AG04450 (cell line): ENCODE measurements at regions of chr1 and their contacts with region 1.

Region 1: DNA sequence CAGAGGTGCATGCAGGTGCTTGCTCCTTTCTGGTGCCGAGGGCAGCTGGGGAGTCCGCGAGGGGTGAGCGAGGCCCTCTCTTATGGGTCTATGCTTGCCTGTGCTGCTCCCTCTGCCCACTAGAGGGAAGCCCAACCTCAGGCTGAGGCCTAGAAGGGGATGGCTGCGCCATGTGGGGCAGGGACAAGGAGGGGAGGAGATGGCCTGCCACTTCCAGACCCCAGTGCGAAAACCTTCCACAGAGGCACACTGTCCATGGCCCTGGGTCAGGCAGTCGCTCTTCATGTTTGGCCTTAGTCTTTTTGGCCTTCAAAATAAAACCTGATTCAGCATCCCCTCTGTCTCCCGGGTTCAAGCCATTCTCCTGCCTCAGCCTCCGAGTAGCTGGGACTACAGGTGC is 14.0 kb downstream of the RHBG start:
- DNase-seq: no peak
- H3K4me3 ChIP-seq: no peak overlapping the region
- H3K27ac ChIP-seq: no peak overlapping the region
- H3K27me3 ChIP-seq: peaks cover 30% of the 10 kb centered on the region
- CTCF ChIP-seq: peak; percentile 91

Region 2: DNA sequence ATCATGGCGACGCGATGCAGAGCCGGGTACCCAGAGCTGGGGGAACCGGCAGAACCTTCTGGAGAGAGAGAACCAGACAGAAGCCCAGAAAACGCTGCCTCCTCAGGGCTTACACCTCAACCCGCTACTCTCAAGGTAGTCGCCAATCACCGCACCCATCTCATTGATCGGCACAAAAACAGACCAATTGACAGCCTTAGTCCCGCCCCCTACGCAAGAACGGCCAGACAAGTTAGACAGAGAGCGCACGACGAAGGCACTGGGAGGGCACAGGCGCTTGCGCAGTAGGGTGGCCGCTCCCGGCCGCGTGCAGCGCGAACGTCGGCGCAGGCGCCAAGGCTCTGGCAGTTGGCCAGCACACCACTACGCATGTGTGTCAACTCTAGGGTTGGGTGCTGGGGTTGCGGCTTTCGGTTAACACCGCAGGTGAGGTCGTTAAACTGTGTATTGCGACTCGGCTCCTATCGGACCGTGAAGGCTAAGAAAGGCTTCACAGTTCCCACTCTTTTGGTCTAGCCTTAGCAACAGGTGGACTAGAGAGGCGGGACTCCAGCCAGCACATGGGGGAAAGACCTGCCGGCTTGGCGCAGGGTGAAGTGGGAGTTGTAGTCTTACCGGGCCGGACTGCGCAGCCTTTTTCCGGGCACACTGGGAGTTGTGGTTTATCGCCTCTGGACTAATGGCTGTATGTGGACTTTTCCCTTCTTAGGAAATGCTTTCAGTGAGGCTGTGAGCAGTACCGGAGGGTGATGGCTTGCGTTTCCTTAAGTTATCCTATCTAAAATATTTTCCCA is 44.6 kb before region 1 on chr1 and contains the starts of genes CCT3 and TSACC:
- CTCF ChIA-PET with region 1: interaction called, 11 read pairs
- POLR2A ChIA-PET with region 1: no interaction called
- DNase-seq: peak; percentile 100
- H3K4me3 ChIP-seq: peak within 1 kb of the TSS; percentile 98
- H3K27ac ChIP-seq: peak within 1 kb of the TSS; percentile 39
- H3K27me3 ChIP-seq: no peaks in the 10 kb centered on the region
- CTCF ChIP-seq: no peak
- polyA plus RNA-seq, gene CCT3: 314 and 359 TPM in 2 replicates
- polyA plus RNA-seq, gene TSACC: 0.27 and 0.48 TPM in 2 replicates

Region 3: GRCh38 chr1:156394835-156395461 is 11.9 kb after region 1 on chr1:
- CTCF ChIA-PET with region 1: interaction called, 15 read pairs
- POLR2A ChIA-PET with region 1: no interaction called
- DNase-seq: no peak
- H3K4me3 ChIP-seq: no peak overlapping the region
- H3K27ac ChIP-seq: no peak overlapping the region
- H3K27me3 ChIP-seq: peaks cover 46% of the 10 kb centered on the region
- CTCF ChIP-seq: no peak

Region 4: DNA sequence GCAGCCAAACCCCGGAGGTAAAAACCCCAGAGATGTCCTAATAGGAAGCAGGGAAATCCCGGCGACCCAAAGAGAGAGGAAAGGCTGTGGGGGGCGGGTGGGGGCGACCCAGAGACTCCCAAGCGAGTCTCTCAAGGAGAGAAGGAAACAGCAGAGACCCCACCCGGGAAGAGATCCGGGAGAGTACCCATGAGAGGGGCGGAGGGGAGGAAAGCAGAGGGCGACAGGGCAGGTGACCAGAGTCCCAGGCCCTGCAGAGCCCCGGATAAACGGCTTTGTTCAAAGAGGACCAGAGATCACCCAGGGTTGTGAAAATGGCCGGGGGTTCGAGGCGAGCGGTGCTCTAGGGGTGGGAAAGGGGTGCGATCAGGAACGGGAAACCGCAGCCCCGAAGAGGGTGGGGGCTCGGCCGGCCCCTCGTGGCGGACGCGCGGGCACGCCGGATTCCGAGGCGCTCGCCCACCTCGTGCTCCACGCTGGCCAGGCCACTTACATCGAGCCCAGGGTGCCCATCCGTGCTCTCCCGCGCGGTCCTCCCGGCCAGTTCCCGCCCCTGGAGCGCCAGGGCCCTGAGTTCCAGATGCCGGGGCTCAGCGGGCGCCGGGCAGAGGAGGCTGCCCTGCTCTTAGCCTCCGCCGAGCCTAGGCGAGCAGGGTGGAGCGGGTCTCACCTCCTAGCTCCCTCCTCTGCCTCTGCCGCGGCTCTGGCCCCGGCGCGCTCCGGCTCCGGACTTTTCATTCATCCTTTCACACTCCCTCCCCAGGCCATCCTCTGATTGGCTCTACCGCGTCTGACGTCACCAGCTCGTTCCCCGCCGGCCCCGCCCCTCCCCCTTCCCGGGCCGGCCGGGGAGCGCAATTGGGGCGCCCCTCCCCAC is 38.3 kb after region 1 on chr1:
- CTCF ChIA-PET with region 1: interaction called, 20 read pairs
- POLR2A ChIA-PET with region 1: no interaction called
- DNase-seq: no peak
- H3K4me3 ChIP-seq: no peak overlapping the region; the same call in 1 of the 2 replicates
- H3K27ac ChIP-seq: no peak overlapping the region
- H3K27me3 ChIP-seq: peaks cover 82% of the 10 kb centered on the region
- CTCF ChIP-seq: no peak

Region 5: GRCh38 chr1:156445789-156446263 is 62.8 kb after region 1 on chr1:
- CTCF ChIA-PET with region 1: interaction called, 445 read pairs
- POLR2A ChIA-PET with region 1: interaction called, 15 read pairs
- DNase-seq: peak; percentile 39
- H3K4me3 ChIP-seq: no peak overlapping the region
- H3K27ac ChIP-seq: no peak overlapping the region
- H3K27me3 ChIP-seq: peaks cover 64% of the 10 kb centered on the region
- CTCF ChIP-seq: peak; percentile 99

Region 6: GRCh38 chr1:156601122-156601830 is 218.3 kb after region 1 on chr1 and contains the start of gene GPATCH4:
- CTCF ChIA-PET with region 1: interaction called, 19 read pairs
- POLR2A ChIA-PET with region 1: interaction called, 4 read pairs
- DNase-seq: peak; percentile 78
- H3K4me3 ChIP-seq: peak within 1 kb of the TSS; percentile 93
- H3K27ac ChIP-seq: peak within 1 kb of the TSS; percentile 68
- H3K27me3 ChIP-seq: peaks cover 3% of the 10 kb centered on the region
- CTCF ChIP-seq: no peak
- polyA plus RNA-seq, gene GPATCH4: 23.1 and 27.6 TPM in 2 replicates

Region 7: GRCh38 chr1:156892190-156893047 is 509.4 kb after region 1 on chr1:
- CTCF ChIA-PET with region 1: interaction called, 11 read pairs
- POLR2A ChIA-PET with region 1: no interaction called
- DNase-seq: peak; percentile 68
- H3K4me3 ChIP-seq: peak overlapping the region; percentile 41
- H3K27ac ChIP-seq: peak overlapping the region; percentile 61
- H3K27me3 ChIP-seq: peaks cover 6% of the 10 kb centered on the region
- CTCF ChIP-seq: peak; percentile 82